Calu3 (cell line): ENCODE measurements at regions of chr1 and their contacts with region 1.

Region 1: DNA sequence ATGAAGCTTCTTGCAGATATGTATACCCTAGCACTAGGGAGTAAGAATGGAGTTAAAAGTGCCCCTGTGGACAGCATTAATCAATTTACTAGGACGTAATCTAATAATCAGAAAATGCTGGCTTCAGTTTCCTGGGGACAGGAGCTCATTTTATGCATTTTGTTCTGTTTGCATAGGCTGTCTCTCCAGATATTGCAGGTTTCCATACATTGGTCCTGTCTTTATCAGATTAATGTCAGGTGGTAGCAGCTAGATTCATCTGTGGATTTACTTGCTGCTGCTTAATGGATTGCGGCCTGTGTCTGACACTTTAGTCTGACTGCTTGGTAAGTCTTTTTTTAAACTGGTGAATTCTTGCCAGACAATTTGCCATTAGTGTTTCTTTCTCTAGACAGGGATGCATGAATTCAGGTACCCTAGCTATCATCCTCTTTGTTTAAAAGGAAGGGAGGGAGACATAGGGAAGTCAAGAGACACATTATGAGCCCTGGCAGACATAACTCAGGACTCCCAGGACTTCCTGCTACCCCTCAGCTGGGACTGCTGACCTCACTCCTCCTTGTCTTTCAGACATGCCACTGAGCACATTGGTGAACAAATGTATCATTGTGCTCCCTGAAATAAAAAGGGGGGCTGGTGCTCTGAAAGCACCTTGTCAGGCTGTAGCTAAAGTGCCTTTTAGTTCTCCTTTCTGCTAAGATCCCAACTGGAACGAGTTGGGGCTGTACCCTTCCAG is 47.7 kb downstream of the NOS1AP start:
- DNase-seq: no peak
- H3K4me3 Mint-ChIP-seq: no peak overlapping the region
- H3K27ac Mint-ChIP-seq: no peak overlapping the region
- H3K4me1 Mint-ChIP-seq: no peaks in the 10 kb centered on the region
- H3K27me3 Mint-ChIP-seq: no peaks in the 10 kb centered on the region
- CTCF ChIP-seq: no peak

Region 2: GRCh38 chr1:162136760-162137159 is 19.6 kb after region 1 on chr1:
- CTCF ChIA-PET with region 1: no interaction called
- intact Hi-C with region 1: loop called (anchors 2 kb)
- DNase-seq: peak; percentile 38
- H3K4me3 Mint-ChIP-seq: peak overlapping the region; percentile 3
- H3K27ac Mint-ChIP-seq: peak overlapping the region; percentile 8
- H3K4me1 Mint-ChIP-seq: peaks cover 69% of the 10 kb centered on the region
- H3K27me3 Mint-ChIP-seq: no peaks in the 10 kb centered on the region
- CTCF ChIP-seq: no peak